CD8-positive, alpha-beta T cell (primary cell): ENCODE measurements at regions of chr13 and their contacts with region 1.

Region 1: DNA sequence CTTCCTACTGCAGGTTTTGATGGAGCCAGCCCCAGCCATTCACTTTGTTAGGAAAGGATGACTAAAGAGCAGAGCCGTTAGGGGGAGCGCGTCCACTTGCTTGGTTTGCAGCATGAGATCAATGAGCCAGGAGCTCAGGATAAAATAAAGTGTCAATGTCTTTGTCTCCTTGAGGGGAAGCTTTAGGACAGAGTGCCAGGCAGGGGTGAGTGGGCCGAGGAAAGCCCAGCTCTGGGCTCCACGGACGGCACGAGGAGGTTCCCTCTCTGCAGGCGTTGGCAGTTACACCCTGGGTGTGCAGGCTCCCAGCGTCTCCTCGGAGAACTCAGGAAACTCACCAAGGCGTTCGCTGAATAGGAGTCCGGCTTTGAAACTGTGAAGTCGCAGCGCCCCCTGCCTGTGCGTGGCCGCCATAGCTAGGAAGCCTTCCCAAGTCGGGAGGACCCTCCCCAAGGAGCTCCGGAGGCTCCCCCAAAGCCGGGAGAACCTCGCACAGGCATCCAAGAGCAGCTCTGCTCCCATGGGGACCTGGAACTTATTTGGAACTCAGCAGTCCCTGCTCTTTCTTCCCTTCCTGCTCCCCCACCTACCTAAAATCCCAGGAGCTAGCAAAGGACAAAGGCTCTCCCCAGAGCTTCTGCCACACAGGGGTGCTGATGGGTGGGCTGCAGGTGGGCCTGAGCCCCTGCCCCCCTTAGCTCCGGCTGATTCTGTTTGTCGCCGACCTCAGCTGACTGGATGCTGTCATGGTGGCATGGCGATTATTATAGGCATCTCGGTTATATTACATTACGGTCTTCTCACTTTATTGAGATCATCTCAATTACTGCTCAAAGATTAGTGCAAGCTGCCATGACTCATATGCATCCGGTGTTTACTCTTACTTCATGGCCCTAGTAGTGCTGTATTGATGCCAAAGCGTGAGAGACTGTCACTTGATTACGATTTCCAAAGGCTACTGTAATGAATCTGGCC is 34.4 kb downstream of the GSX1 start:
- DNase-seq: peak; percentile 26 to 80 (median 69)
- ATAC-seq: peak; percentile 62
- H3K4me3 ChIP-seq: no peak overlapping the region
- H3K4me3 Mint-ChIP-seq: no peak overlapping the region
- H3K27ac ChIP-seq: no peak overlapping the region
- H3K27ac Mint-ChIP-seq: no peak overlapping the region
- H3K4me1 ChIP-seq: no peaks in the 10 kb centered on the region
- H3K4me1 Mint-ChIP-seq: peaks cover 10% of the 10 kb centered on the region
- H3K27me3 ChIP-seq: peaks cover 0 to 3% of the 10 kb centered on the region in 2 experiments
- H3K27me3 Mint-ChIP-seq: peaks cover 57% of the 10 kb centered on the region
- CTCF ChIP-seq: peak; percentile 78

Region 2: DNA sequence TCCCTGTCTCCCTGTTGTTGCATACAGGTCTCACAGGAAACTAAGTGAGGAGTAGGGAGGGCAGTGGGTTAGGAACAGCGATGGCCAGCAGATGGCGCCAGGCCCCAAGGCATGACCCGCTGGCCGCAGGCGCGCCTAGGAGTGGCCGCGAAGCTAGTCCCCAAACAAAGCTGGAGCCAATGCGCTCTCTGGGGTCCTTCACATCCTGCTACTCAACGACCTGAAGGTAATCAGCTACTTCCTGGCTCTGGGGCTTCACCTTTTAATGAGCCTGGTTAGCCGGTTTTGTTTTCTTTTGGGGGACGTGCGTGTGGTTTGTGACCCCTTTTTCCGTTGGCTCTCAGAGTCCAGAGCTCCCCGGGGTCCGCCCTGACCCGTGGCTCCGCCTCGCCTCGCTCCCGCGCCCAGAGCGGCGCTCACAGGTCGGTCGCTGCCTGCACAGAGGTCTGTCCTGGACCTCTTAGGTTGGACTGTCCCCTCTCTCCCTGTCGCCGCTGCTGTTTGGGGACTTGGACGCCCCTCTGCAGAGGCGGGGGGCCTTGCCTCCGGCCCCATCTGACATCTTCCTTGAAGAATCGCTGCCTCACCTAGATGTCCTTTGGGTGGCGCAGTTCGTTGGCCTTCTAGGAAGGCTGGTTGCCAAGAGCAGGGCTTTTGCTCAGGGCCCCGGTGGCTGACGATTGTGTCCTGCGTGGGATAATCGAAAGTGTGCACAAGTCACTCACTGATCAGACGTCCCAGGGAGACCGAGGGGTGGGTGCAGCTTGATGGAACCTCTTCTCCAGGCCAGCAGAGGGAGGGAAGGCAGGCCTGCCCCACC is 464.4 kb before region 1 on chr13:
- CTCF ChIA-PET with region 1: interaction called, 108 read pairs
- POLR2A ChIA-PET with region 1: interaction called, 4 read pairs
- intact Hi-C with region 1: loop called (anchors 1 kb)
- DNase-seq: peak; percentile 56 to 86 (median 78)
- ATAC-seq: peak; percentile 90
- H3K4me3 ChIP-seq: peak overlapping the region; percentile 17 to 39
- H3K4me3 Mint-ChIP-seq: peak overlapping the region; percentile 67
- H3K27ac ChIP-seq: no peak overlapping the region
- H3K27ac Mint-ChIP-seq: no peak overlapping the region
- H3K4me1 ChIP-seq: peaks cover 5% of the 10 kb centered on the region
- H3K4me1 Mint-ChIP-seq: peaks cover 5% of the 10 kb centered on the region
- H3K27me3 ChIP-seq: peaks cover 0 to 10% of the 10 kb centered on the region in 2 experiments
- H3K27me3 Mint-ChIP-seq: peaks cover 17% of the 10 kb centered on the region
- CTCF ChIP-seq: peak; percentile 73

Region 3: DNA sequence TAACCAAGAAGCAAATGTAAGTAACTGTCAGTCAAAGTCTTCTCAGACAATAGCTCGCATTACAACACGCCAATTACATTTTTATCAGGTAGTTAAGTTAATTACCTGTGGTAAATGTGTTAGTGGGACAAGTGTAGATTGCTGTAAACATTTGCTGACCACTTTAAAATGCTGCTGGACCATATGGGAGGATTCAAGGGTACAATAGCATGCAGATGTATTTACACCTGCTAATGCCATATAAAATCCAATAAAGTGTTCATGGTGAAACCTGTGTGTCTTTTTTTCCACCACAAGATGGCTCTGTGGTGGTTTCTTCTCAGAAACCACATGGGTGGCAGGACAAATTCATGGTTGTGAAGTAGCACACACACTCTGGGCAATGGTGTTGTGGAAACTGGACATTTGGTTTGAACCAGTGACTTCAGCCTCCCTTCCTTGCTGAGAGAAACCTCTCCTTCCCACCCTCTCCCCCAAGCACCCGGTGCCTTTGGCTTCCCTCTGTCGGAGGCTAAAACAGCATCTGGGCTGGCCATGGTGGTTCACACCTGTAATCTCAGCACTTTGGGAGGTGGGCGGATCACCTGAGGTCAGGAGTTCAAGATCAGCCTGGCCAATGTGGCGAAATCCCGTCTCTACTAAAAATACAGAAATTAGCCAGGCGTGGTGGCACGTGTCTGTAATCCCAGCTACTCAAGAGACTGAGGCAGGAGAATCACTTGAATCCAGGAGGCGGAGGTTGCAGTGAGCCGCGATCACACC is 420.3 kb before region 1 on chr13:
- CTCF ChIA-PET with region 1: interaction called, 65 read pairs
- POLR2A ChIA-PET with region 1: no interaction called
- intact Hi-C with region 1: loop called (anchors 1 kb)
- DNase-seq: peak in 7 of 9 experiments; percentile 18 to 77 (median 44)
- ATAC-seq: peak; percentile 56
- H3K4me3 ChIP-seq: no peak overlapping the region
- H3K4me3 Mint-ChIP-seq: no peak overlapping the region
- H3K27ac ChIP-seq: no peak overlapping the region
- H3K27ac Mint-ChIP-seq: no peak overlapping the region
- H3K4me1 ChIP-seq: no peaks in the 10 kb centered on the region
- H3K4me1 Mint-ChIP-seq: peaks cover 4% of the 10 kb centered on the region
- H3K27me3 ChIP-seq: no peaks in the 10 kb centered on the region
- H3K27me3 Mint-ChIP-seq: no peaks in the 10 kb centered on the region
- CTCF ChIP-seq: peak; percentile 54

Region 4: GRCh38 chr13:27595055-27595811 is 231.4 kb before region 1 on chr13:
- CTCF ChIA-PET with region 1: no interaction called
- POLR2A ChIA-PET with region 1: no interaction called
- intact Hi-C with region 1: no loop called
- DNase-seq: no peak
- ATAC-seq: no peak
- H3K4me3 ChIP-seq: no peak overlapping the region
- H3K4me3 Mint-ChIP-seq: no peak overlapping the region
- H3K27ac ChIP-seq: no peak overlapping the region
- H3K27ac Mint-ChIP-seq: no peak overlapping the region
- H3K4me1 ChIP-seq: peaks cover 5% of the 10 kb centered on the region
- H3K4me1 Mint-ChIP-seq: peaks cover 6% of the 10 kb centered on the region
- H3K27me3 ChIP-seq: no peaks in the 10 kb centered on the region
- H3K27me3 Mint-ChIP-seq: no peaks in the 10 kb centered on the region
- CTCF ChIP-seq: no peak

Region 5: GRCh38 chr13:27775943-27776342 is 50.7 kb before region 1 on chr13:
- CTCF ChIA-PET with region 1: interaction called, 61 read pairs
- POLR2A ChIA-PET with region 1: no interaction called
- intact Hi-C with region 1: loop called (anchors 1 to 2 kb)
- DNase-seq: no peak
- ATAC-seq: no peak
- H3K4me3 ChIP-seq: no peak overlapping the region
- H3K4me3 Mint-ChIP-seq: no peak overlapping the region
- H3K27ac ChIP-seq: no peak overlapping the region
- H3K27ac Mint-ChIP-seq: no peak overlapping the region
- H3K4me1 ChIP-seq: no peaks in the 10 kb centered on the region
- H3K4me1 Mint-ChIP-seq: no peaks in the 10 kb centered on the region
- H3K27me3 ChIP-seq: no peaks in the 10 kb centered on the region
- H3K27me3 Mint-ChIP-seq: peaks cover 51% of the 10 kb centered on the region
- CTCF ChIP-seq: no peak

Region 6: DNA sequence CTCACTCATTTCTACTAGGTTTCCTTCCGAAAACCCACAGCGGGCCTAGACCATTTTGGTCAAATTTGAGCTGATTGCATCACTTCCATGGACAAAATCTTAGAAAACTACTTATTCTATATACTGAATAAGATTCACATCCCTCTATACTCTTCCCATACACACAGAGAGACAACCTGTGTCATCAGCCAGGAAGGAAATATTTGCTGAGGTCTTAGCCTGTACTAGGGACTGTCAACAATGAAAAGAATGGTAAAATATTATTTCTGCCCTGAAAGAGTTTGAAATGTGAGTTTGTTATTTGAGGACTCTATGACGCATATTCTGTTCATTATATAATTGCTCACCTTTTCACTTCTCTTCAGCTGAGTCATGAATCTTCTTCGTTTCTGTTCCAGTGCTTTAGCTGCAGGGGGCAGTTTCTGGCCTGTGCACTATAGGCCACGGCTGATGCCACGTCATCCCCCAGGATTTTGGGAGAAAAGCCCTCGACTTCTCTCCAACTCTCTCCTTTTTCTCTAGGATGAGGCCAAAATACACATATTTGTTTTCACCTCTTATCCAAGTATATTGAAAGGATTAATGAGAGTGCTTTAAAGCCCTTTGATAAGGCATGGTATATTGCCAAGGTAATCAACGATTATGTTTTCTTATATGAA is 13.3 kb after region 1 on chr13:
- CTCF ChIA-PET with region 1: interaction called, 47 read pairs
- POLR2A ChIA-PET with region 1: no interaction called
- intact Hi-C with region 1: no loop called
- DNase-seq: no peak
- ATAC-seq: no peak
- H3K4me3 ChIP-seq: no peak overlapping the region
- H3K4me3 Mint-ChIP-seq: no peak overlapping the region
- H3K27ac ChIP-seq: no peak overlapping the region
- H3K27ac Mint-ChIP-seq: no peak overlapping the region
- H3K4me1 ChIP-seq: no peaks in the 10 kb centered on the region
- H3K4me1 Mint-ChIP-seq: no peaks in the 10 kb centered on the region
- H3K27me3 ChIP-seq: peaks cover 0 to 6% of the 10 kb centered on the region in 2 experiments
- H3K27me3 Mint-ChIP-seq: peaks cover 49% of the 10 kb centered on the region
- CTCF ChIP-seq: no peak

Region 7: GRCh38 chr13:27905650-27906049 is 79.0 kb after region 1 on chr13:
- CTCF ChIA-PET with region 1: no interaction called
- POLR2A ChIA-PET with region 1: no interaction called
- intact Hi-C with region 1: no loop called
- DNase-seq: no peak
- ATAC-seq: no peak
- H3K4me3 ChIP-seq: no peak overlapping the region
- H3K4me3 Mint-ChIP-seq: no peak overlapping the region
- H3K27ac ChIP-seq: no peak overlapping the region
- H3K27ac Mint-ChIP-seq: no peak overlapping the region
- H3K4me1 ChIP-seq: no peaks in the 10 kb centered on the region
- H3K4me1 Mint-ChIP-seq: no peaks in the 10 kb centered on the region
- H3K27me3 ChIP-seq: peaks cover 0 to 6% of the 10 kb centered on the region in 2 experiments
- H3K27me3 Mint-ChIP-seq: peaks cover 51% of the 10 kb centered on the region
- CTCF ChIP-seq: no peak

Region 8: DNA sequence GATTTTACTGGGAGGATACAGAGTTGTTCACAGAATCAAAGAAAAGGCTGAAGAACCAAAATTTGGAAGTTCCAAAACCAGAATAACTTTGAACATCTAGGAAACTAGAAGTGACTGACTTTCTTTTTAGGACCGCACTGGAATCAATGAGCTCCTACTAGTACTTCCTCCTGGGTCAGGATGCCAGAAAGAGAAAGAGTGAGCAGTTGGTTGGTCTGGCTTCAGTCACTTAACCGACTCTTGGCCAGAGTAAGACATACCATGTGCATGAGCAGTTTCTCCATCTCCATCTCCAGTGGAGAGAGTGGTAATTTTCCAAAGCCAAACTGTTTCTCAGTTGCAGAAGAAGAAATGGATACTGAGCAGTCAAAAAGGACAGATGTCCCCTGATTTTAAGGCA is 966.3 kb after region 1 on chr13:
- CTCF ChIA-PET with region 1: no interaction called
- POLR2A ChIA-PET with region 1: no interaction called
- intact Hi-C with region 1: loop called (anchors 1 to 5 kb)
- DNase-seq: no peak
- ATAC-seq: no peak
- H3K4me3 ChIP-seq: no peak overlapping the region
- H3K4me3 Mint-ChIP-seq: no peak overlapping the region
- H3K27ac ChIP-seq: no peak overlapping the region
- H3K27ac Mint-ChIP-seq: no peak overlapping the region
- H3K4me1 ChIP-seq: no peaks in the 10 kb centered on the region
- H3K4me1 Mint-ChIP-seq: no peaks in the 10 kb centered on the region
- H3K27me3 ChIP-seq: peaks cover 0 to 3% of the 10 kb centered on the region in 2 experiments
- H3K27me3 Mint-ChIP-seq: peaks cover 36% of the 10 kb centered on the region
- CTCF ChIP-seq: no peak